Posterior vena cava (tissue), 2 donors: ENCODE measurements at regions of chr4 and their contacts with region 1.

Region 1: DNA sequence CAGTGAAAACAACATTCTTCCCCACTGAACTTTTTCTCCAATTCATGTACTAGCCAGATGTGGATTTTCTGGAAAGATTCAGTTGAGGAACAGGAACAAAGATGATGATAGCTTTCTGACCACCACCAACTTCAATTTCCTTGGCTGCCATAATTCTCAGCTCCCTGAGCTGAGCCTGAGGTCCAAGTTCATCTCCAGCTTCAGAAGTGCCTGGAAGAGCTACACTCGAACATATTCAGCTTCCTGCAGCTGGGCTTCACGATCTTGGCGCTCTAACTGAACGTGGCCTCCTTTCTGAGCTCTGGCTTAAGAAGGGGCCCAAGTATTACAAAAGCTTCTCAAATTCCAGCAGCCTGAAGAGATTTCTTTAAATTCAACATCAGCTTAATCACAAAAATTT is 83.9 kb downstream of the QDPR start:
- DNase-seq: no peak

Region 2: GRCh38 chr4:16995451-16995850 is 432.5 kb before region 1 on chr4:
- intact Hi-C with region 1: loop called in 1 of 2 experiments (anchors 5 kb)
- DNase-seq: no peak

Region 3: DNA sequence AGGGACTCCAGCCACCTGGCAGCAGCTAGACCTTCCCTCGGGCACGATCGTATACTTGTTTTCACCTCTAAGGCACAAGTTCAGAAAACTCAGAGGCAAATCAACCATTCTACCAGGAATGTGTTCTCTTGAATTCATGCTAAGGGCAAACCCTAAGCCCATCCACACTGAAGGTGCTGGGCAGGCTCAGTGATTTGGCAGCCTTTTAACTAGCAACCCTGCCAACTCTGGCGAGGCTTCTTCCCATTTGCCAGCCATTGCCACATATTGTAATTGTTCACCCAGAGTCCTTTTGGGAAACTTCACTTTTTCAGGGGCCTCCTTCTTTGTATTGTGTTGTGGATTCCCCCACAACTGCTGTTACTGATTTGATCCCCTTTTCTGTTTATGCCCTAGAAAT is 230.9 kb before region 1 on chr4:
- intact Hi-C with region 1: no loop called
- DNase-seq: no peak